GM13976 (cell line): ENCODE measurements at regions of chr12 and their contacts with region 1.

Region 1: GRCh38 chr12:26017484-26018206 is 59.2 kb downstream of the RASSF8 start:
- DNase-seq: peak; percentile 25
- CTCF ChIP-seq: peak; percentile 18

Region 2: GRCh38 chr12:25447046-25447445 is 570.6 kb before region 1 on chr12:
- in situ Hi-C with region 1: loop called (anchors 10 kb)
- DNase-seq: no peak
- CTCF ChIP-seq: no peak

Region 3: GRCh38 chr12:25637752-25638151 is 379.9 kb before region 1 on chr12:
- in situ Hi-C with region 1: no loop called
- DNase-seq: no peak
- CTCF ChIP-seq: no peak

Region 4: GRCh38 chr12:25648460-25648859 is 369.2 kb before region 1 on chr12:
- in situ Hi-C with region 1: no loop called
- DNase-seq: no peak
- CTCF ChIP-seq: no peak